ENCODE measurements at regions of chr5 and their contacts with region 1.

Region 1: GRCh38 chr5:96934708-96935558 is 947 bp upstream of the LNPEP start:
- DNase-seq: peak; percentile 99
- H3K4me3 Mint-ChIP-seq: peak overlapping the region; percentile 81
- H3K27ac Mint-ChIP-seq: peak overlapping the region; percentile 94
- H3K4me1 Mint-ChIP-seq: peaks cover 54% of the 10 kb centered on the region
- H3K27me3 Mint-ChIP-seq: no peaks in the 10 kb centered on the region

Region 2: GRCh38 chr5:95554647-95555548 is 1380.0 kb before region 1 on chr5 and contains the starts of genes ARSK and SKIC3:
- intact Hi-C with region 1: loop called (anchors 1 kb)
- DNase-seq: peak; percentile 97
- H3K4me3 Mint-ChIP-seq: peak within 1 kb of the TSS; percentile 96
- H3K27ac Mint-ChIP-seq: peak within 1 kb of the TSS; percentile 94
- H3K4me1 Mint-ChIP-seq: peaks cover 40% of the 10 kb centered on the region
- H3K27me3 Mint-ChIP-seq: no peaks in the 10 kb centered on the region
- total RNA-seq, gene ARSK: 3.2 and 4.1 TPM in 2 replicates
- total RNA-seq, gene SKIC3: 61.2 and 69.5 TPM in 2 replicates

Region 3: DNA sequence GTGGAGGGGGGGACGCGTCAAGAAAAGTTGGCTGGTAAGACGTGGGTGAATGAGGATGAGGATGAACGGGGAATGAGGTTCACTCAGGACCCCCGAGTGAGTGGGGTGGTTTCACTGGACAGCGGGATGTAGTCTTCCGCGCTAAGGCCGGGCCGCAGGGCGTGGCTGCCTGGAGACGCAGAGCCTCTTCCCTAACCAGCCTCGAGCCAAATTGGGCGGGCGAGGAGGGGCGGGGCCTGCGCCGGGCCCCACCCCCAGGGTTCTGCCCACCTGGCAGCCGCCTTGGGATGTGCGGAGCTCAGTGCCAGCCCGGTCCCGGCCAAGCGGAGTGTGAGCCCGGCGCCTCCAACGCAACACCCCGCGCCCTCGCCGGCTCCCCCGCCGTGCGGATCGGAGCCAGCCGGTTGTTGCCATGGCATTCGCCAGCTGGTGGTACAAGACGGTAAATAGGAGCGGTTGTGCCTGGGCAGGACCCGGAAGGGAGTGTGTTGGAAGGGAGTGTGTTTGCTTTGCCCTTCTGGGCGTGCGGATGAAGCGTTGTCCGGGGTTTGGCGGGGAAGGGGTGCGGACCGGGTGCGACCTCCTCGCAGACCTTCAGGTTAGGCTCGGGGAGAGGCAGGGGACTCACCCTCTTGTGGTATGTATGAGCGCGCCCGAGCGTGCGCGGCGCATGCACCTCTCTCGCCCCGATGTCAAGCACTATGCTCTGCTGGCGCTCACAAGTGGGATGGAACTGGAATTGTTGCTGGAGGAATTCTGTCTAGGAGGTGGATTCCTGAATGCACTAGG is 272.0 kb before region 1 on chr5:
- intact Hi-C with region 1: loop called (anchors 1 kb)
- DNase-seq: peak; percentile 96
- H3K4me3 Mint-ChIP-seq: peak overlapping the region; percentile 99
- H3K27ac Mint-ChIP-seq: peak overlapping the region; percentile 99
- H3K4me1 Mint-ChIP-seq: peaks cover 49% of the 10 kb centered on the region
- H3K27me3 Mint-ChIP-seq: peaks cover 12% of the 10 kb centered on the region

Region 4: DNA sequence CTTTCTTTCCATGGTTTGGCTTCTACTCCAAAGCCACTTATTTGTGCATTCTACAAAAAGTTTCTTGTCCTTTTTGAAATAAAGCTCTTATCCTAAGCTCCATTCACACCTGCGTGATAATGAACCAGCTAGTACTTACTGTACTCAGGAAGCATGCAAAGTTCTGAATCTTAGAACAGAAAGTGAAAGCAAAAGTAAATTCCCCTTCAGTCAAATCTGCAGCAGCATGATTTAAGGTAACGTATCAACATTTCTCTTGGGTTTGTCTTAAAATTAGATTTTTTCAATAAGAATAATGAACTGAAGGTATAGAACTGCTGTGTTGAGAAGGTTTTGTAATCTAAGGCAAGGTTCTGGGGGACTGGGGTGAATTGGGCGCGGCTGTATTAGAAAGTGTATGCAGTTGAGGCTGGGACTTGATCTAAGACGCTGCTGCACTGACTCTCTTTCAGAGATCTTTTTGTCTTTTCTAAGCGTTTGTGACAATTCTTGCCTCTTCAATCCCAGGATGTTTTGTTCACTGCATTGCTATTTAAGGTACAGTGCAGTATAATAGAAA is 58.6 kb before region 1 on chr5 and contains the start of gene ERAP2:
- intact Hi-C with region 1: loop called (anchors 1 kb)
- DNase-seq: peak; percentile 77
- H3K4me3 Mint-ChIP-seq: peak within 1 kb of the TSS; percentile 96
- H3K27ac Mint-ChIP-seq: peak within 1 kb of the TSS; percentile 98
- H3K4me1 Mint-ChIP-seq: peaks cover 62% of the 10 kb centered on the region
- H3K27me3 Mint-ChIP-seq: no peaks in the 10 kb centered on the region
- total RNA-seq, gene ERAP2: 48.9 and 51.3 TPM in 2 replicates

Region 5: GRCh38 chr5:96957254-96958049 is 22.5 kb after region 1 on chr5:
- intact Hi-C with region 1: loop called (anchors 1 kb)
- DNase-seq: no peak
- H3K4me3 Mint-ChIP-seq: peak overlapping the region; percentile 58
- H3K27ac Mint-ChIP-seq: peak overlapping the region; percentile 84
- H3K4me1 Mint-ChIP-seq: peaks cover 61% of the 10 kb centered on the region
- H3K27me3 Mint-ChIP-seq: no peaks in the 10 kb centered on the region

Region 6: DNA sequence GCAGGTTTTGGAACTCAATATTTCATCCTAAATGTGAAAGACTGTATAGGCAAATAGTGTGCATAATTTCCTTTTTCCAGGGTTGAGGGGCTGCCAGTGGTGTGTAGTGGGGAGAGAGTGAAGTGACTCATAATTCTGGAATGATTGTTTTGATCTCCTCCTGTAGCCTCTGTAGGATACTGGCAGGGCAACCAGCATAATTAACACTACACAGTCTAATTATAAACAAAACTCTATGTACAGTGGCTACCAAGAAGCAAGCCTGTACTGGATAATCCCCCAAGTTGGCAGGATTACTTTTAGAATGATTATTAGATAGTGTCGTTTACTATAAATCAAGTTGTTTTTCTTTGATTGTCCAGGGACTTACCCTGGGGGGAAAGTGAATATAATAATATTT is 33.1 kb after region 1 on chr5:
- intact Hi-C with region 1: no loop called
- DNase-seq: no peak
- H3K4me3 Mint-ChIP-seq: no peak overlapping the region
- H3K27ac Mint-ChIP-seq: no peak overlapping the region
- H3K4me1 Mint-ChIP-seq: peaks cover 58% of the 10 kb centered on the region
- H3K27me3 Mint-ChIP-seq: no peaks in the 10 kb centered on the region

Region 7: GRCh38 chr5:97094579-97095317 is 159.8 kb after region 1 on chr5:
- intact Hi-C with region 1: loop called (anchors 10 kb)
- DNase-seq: peak; percentile 83
- H3K4me3 Mint-ChIP-seq: peak overlapping the region; percentile 56
- H3K27ac Mint-ChIP-seq: peak overlapping the region; percentile 83
- H3K4me1 Mint-ChIP-seq: peaks cover 21% of the 10 kb centered on the region
- H3K27me3 Mint-ChIP-seq: peaks cover 36% of the 10 kb centered on the region